ENCODE measurements at regions of chr9 and their contacts with region 1.

Region 1: DNA sequence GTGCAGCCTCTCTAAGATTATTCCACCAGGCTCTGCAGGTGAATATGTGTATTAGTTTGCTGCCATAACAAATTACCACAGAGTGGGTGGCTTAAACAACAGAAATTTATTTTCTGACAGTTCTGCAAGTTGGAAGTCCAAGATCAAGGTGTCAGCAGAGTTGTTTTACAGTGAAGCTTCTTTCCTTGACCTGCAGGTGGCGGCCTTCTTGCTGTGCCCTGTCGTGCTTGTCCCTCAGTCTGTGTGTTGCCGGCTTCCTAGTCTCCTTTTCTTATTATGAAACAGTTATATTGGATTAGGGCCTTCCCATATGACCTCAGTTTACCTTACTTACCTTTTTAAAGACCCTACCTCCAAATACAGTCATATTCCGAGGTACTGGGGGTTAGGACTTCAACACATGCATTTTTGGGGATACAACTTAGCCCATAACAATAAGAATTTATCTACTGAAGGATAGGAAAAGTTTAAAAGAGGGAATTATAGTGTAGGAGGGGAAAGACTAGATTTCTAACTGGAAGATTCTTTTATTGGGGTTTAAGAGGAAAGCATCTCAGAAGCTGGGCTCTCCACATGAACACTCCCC is 97.4 kb downstream of the OSTF1 start:
- DNase-seq: peak; percentile 3 to 63 (median 44)
- ATAC-seq: peak; percentile 66
- H3K4me3 ChIP-seq: no peak overlapping the region
- H3K4me3 Mint-ChIP-seq: no peak overlapping the region
- H3K27ac ChIP-seq: no peak overlapping the region
- H3K27ac Mint-ChIP-seq: no peak overlapping the region
- H3K4me1 ChIP-seq: peaks cover 10% of the 10 kb centered on the region
- H3K4me1 Mint-ChIP-seq: peaks cover 19% of the 10 kb centered on the region
- H3K27me3 ChIP-seq: no peaks in the 10 kb centered on the region
- H3K27me3 Mint-ChIP-seq: no peaks in the 10 kb centered on the region
- CTCF ChIP-seq: peak; percentile 69

Region 2: DNA sequence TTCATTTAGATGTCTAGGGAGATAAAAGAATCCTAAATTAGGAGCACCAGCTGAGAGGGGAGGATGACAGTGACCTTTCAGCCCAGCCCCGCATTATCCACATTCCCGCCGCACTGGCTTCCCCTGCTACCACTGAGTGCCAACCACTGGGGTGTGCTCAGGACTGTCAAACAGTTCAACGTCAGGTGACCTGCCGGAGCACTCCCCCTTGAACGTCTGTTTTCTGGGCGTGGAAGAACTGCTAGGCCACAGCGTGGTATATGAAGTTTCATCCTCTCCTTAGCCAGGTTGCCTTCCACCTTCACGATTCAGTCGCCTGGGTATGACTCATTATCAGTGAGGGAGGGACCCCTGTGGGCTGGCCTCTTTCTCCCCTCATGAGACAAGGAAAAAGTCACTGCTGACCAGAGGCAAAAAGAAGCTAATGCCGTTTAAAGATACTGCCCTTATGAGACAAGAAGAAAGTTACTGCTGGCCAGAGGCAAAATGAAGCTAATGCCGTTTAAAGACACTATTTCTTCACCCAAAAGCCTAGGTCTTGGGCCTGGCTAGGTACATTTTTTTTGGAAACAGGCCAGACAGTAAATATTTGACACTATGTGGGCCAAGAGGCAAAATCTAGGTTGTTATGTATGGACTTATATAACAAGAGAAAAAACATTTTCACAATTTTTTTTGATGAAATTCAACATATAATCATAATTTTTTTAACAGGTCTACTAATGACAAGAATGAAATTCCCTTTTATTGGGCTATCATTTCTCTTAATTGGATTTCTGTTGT is 102.3 kb before region 1 on chr9:
- CTCF ChIA-PET with region 1: interaction called, 8 read pairs
- POLR2A ChIA-PET with region 1: no interaction called
- intact Hi-C with region 1: loop called (anchors 2 to 5 kb)
- DNase-seq: peak in 6 of 9 experiments; percentile 18 to 79 (median 59)
- ATAC-seq: peak; percentile 47
- H3K4me3 ChIP-seq: no peak overlapping the region
- H3K4me3 Mint-ChIP-seq: no peak overlapping the region
- H3K27ac ChIP-seq: peak overlapping the region in 1 of 2 experiments; percentile 53
- H3K27ac Mint-ChIP-seq: peak overlapping the region; percentile 91
- H3K4me1 ChIP-seq: peaks cover 22% of the 10 kb centered on the region
- H3K4me1 Mint-ChIP-seq: peaks cover 45% of the 10 kb centered on the region
- H3K27me3 ChIP-seq: no peaks in the 10 kb centered on the region
- H3K27me3 Mint-ChIP-seq: no peaks in the 10 kb centered on the region
- CTCF ChIP-seq: no peak

Region 3: DNA sequence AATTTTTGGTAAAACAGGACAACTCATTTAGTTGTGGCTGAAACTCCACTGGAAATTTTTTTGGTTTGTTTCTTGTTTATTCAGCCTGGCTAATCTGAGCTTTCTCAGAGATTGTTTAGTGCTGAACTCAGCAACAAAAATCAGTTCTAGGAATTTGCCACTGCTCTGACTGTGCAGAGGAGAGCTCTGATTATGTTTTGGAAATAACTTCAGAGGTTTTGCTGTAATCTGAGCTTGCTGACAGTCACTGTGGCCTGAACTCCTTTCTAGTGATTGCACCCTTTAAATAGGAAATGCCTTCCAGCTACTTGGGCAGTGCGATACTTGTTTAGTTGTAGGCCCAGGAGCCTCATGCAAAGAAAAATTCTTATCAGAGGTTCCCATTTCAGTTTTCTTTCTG is 37.1 kb before region 1 on chr9:
- CTCF ChIA-PET with region 1: interaction called, 10 read pairs
- POLR2A ChIA-PET with region 1: no interaction called
- intact Hi-C with region 1: loop called in 1 of 2 experiments (anchors 5 kb)
- DNase-seq: peak in 2 of 9 experiments; percentile 16 to 34
- ATAC-seq: no peak
- H3K4me3 ChIP-seq: no peak overlapping the region
- H3K4me3 Mint-ChIP-seq: peak overlapping the region; percentile 55
- H3K27ac ChIP-seq: peak overlapping the region; percentile 12 to 70
- H3K27ac Mint-ChIP-seq: peak overlapping the region; percentile 88
- H3K4me1 ChIP-seq: peaks cover 78% of the 10 kb centered on the region
- H3K4me1 Mint-ChIP-seq: peaks cover 84% of the 10 kb centered on the region
- H3K27me3 ChIP-seq: no peaks in the 10 kb centered on the region
- H3K27me3 Mint-ChIP-seq: no peaks in the 10 kb centered on the region
- CTCF ChIP-seq: no peak

Region 4: DNA sequence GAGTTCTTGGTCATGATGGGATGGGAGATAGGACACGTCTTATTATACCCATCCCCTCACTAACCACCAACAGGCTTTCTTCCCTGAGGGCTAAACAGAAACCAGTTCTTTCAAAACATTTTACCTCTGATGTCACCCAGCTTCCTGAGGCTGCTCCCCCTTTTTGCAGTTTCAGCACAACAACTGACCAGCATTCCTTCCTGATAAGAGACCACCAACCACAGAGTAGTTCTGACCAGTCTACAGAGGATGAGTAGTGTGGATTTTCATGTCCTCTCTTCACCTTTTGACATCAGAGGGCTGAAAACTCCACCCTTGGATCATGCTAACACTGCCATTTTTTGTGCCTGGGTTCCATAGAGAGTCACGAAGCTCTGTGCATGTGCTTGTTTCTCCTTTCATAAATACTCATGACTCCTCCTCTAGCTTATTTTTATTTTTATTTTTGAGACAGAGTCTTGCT is 14.7 kb before region 1 on chr9:
- CTCF ChIA-PET with region 1: interaction called, 17 read pairs
- POLR2A ChIA-PET with region 1: no interaction called
- intact Hi-C with region 1: no loop called
- DNase-seq: no peak
- ATAC-seq: no peak
- H3K4me3 ChIP-seq: no peak overlapping the region
- H3K4me3 Mint-ChIP-seq: no peak overlapping the region
- H3K27ac ChIP-seq: no peak overlapping the region
- H3K27ac Mint-ChIP-seq: no peak overlapping the region
- H3K4me1 ChIP-seq: no peaks in the 10 kb centered on the region
- H3K4me1 Mint-ChIP-seq: peaks cover 18% of the 10 kb centered on the region
- H3K27me3 ChIP-seq: no peaks in the 10 kb centered on the region
- H3K27me3 Mint-ChIP-seq: no peaks in the 10 kb centered on the region
- CTCF ChIP-seq: no peak

Region 5: DNA sequence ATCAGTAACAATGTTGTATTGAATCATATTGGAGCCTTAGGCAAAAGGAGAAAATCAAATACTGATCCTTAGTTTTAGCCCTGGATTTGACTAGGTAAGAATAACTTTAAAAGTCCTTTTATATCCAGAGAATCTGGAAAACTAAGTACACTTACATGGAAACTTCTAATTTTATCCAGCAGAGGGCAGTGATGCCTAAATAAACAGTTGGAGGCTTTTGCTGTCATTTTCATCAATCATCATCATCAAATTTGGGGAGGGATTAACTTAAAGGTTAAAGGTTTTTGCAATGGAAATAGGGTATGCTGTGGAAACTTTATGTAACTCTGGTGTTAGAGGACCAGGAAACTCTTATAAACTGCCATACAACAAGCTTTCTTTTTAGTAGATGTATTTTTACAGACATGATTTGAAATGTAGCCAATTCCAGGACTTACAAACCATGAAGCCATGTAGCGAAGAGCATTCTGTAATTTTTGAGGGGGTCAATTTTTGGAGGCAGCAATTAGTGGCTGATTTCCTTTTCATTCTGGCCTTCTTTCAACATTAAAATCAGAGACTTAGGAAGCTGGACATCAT is 15.3 kb after region 1 on chr9:
- CTCF ChIA-PET with region 1: interaction called, 11 read pairs
- POLR2A ChIA-PET with region 1: no interaction called
- intact Hi-C with region 1: no loop called
- DNase-seq: peak in 2 of 9 experiments; percentile 54 to 62
- ATAC-seq: no peak
- H3K4me3 ChIP-seq: no peak overlapping the region
- H3K4me3 Mint-ChIP-seq: no peak overlapping the region
- H3K27ac ChIP-seq: no peak overlapping the region
- H3K27ac Mint-ChIP-seq: no peak overlapping the region
- H3K4me1 ChIP-seq: no peaks in the 10 kb centered on the region
- H3K4me1 Mint-ChIP-seq: no peaks in the 10 kb centered on the region
- H3K27me3 ChIP-seq: no peaks in the 10 kb centered on the region
- H3K27me3 Mint-ChIP-seq: no peaks in the 10 kb centered on the region
- CTCF ChIP-seq: peak; percentile 65

Region 6: DNA sequence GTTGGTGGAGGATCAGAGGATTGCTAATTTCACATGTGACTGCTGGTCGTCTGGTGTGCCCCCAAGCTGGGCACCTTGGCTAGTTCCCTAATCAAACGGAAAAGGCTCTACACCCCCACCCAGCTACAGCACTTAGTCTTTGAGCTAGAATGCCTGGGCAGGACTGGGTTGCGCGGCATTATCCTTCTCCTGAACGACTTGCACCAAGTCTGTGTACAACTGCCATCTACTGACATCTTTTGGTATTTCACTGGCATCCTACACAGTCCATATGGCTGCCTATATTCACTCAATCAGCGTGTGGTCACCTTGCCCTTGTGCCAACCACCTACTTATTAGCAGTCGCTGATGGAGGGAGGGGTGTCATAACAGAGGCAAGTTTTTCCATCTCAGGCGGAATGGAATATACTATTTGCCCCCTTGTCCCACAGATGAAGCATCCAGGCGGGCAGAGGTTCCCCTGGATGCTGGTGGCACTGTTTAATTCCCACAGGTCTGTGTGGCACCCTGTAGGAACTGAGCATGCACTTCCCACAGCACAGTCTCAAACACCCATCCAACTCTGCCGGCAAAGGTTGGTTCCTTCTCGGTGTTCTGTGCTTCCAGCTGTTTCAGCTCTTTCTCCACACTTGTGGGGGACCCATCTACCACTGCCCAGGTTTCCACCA is 52.8 kb after region 1 on chr9:
- CTCF ChIA-PET with region 1: interaction called, 4 read pairs
- POLR2A ChIA-PET with region 1: no interaction called
- intact Hi-C with region 1: loop called in 1 of 2 experiments (anchors 1 kb)
- DNase-seq: peak in 7 of 9 experiments; percentile 1 to 70 (median 27)
- ATAC-seq: peak; percentile 93
- H3K4me3 ChIP-seq: no peak overlapping the region
- H3K4me3 Mint-ChIP-seq: no peak overlapping the region
- H3K27ac ChIP-seq: no peak overlapping the region
- H3K27ac Mint-ChIP-seq: no peak overlapping the region
- H3K4me1 ChIP-seq: no peaks in the 10 kb centered on the region
- H3K4me1 Mint-ChIP-seq: no peaks in the 10 kb centered on the region
- H3K27me3 ChIP-seq: no peaks in the 10 kb centered on the region
- H3K27me3 Mint-ChIP-seq: no peaks in the 10 kb centered on the region
- CTCF ChIP-seq: peak; percentile 62

Region 7: GRCh38 chr9:75666861-75667554 is 481.3 kb after region 1 on chr9:
- CTCF ChIA-PET with region 1: no interaction called
- POLR2A ChIA-PET with region 1: no interaction called
- intact Hi-C with region 1: no loop called
- DNase-seq: no peak
- ATAC-seq: no peak
- H3K4me3 ChIP-seq: no peak overlapping the region
- H3K4me3 Mint-ChIP-seq: no peak overlapping the region
- H3K27ac ChIP-seq: no peak overlapping the region
- H3K27ac Mint-ChIP-seq: no peak overlapping the region
- H3K4me1 ChIP-seq: no peaks in the 10 kb centered on the region
- H3K4me1 Mint-ChIP-seq: no peaks in the 10 kb centered on the region
- H3K27me3 ChIP-seq: no peaks in the 10 kb centered on the region
- H3K27me3 Mint-ChIP-seq: no peaks in the 10 kb centered on the region
- CTCF ChIP-seq: no peak

Region 8: GRCh38 chr9:76302947-76303940 is 1117.6 kb after region 1 on chr9:
- CTCF ChIA-PET with region 1: no interaction called
- POLR2A ChIA-PET with region 1: no interaction called
- intact Hi-C with region 1: loop called in 1 of 2 experiments (anchors 5 kb)
- DNase-seq: peak in 3 of 9 experiments; percentile 8 to 62 (median 46)
- ATAC-seq: peak; percentile 58
- H3K4me3 ChIP-seq: no peak overlapping the region
- H3K4me3 Mint-ChIP-seq: no peak overlapping the region
- H3K27ac ChIP-seq: no peak overlapping the region
- H3K27ac Mint-ChIP-seq: no peak overlapping the region
- H3K4me1 ChIP-seq: no peaks in the 10 kb centered on the region
- H3K4me1 Mint-ChIP-seq: no peaks in the 10 kb centered on the region
- H3K27me3 ChIP-seq: no peaks in the 10 kb centered on the region
- H3K27me3 Mint-ChIP-seq: peaks cover 8% of the 10 kb centered on the region
- CTCF ChIP-seq: peak; percentile 73

Measured in CD8-positive, alpha-beta T cell (primary cell).